Right cardiac atrium (tissue), 5 donors: ENCODE measurements at regions of chr2 and their contacts with region 1.

Region 1: GRCh38 chr2:173075781-173076580 is at the start of gene MAP3K20:
- DNase-seq: peak; percentile 80 to 93 (median 91)
- ATAC-seq: peak; percentile 91
- H3K4me3 ChIP-seq: peak within 1 kb of the TSS; percentile 70
- H3K27ac ChIP-seq: peak within 1 kb of the TSS; percentile 84
- H3K4me1 ChIP-seq: peaks cover 2% of the 10 kb centered on the region
- H3K27me3 ChIP-seq: no peaks in the 10 kb centered on the region
- total RNA-seq, gene MAP3K20: 268 to 327 (median 295) TPM

Region 2: DNA sequence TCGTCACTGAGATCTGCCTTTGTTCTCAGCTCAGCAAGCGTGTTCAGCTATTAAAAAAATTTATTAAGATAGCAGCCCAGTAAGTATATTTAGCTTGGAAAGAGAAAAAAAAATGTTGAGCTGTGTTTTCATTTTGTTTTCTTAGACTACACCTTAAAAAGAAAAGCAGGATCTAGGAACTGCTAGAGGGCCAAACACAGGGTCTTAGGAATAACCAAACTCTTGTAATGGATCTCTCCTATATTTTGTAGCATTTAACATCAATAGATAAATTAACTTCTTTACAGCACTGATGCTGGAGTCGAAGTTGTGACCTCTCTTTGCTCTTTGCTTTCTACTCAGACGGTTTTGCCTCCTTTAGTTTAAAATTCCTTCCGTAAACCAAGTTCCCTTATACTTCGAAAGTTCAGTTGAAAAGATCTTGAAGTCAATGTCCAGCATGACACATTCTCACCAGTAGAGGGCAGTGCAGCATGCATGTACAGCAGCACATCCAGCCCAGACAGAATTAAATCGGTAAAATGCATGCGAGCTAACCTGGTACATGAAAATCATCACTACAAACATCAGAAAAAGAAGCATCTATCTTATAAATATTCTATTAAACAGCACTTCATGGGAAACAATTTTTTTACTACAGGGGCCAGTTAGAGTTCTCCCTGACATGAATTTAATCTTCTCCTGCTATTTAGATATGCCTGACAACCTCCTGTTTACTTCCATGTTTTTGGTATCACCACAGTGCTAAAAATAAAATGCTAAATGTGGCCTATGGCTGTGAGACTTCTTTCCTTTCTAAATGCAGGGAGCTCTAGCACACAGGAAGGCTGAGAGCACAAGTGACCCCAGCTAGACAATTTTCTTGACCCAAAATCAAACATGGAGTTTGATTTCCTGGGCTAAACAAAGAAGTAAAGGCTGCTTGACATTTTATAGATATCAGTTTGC is 48.5 kb before region 1 on chr2:
- intact Hi-C with region 1: loop called in 2 of 4 experiments (anchors 5 kb)
- DNase-seq: peak; percentile 80 to 90 (median 81)
- ATAC-seq: peak; percentile 73 to 82
- H3K4me3 ChIP-seq: no peak overlapping the region
- H3K27ac ChIP-seq: peak overlapping the region; percentile 86
- H3K4me1 ChIP-seq: peaks cover 4% of the 10 kb centered on the region
- H3K27me3 ChIP-seq: no peaks in the 10 kb centered on the region

Region 3: DNA sequence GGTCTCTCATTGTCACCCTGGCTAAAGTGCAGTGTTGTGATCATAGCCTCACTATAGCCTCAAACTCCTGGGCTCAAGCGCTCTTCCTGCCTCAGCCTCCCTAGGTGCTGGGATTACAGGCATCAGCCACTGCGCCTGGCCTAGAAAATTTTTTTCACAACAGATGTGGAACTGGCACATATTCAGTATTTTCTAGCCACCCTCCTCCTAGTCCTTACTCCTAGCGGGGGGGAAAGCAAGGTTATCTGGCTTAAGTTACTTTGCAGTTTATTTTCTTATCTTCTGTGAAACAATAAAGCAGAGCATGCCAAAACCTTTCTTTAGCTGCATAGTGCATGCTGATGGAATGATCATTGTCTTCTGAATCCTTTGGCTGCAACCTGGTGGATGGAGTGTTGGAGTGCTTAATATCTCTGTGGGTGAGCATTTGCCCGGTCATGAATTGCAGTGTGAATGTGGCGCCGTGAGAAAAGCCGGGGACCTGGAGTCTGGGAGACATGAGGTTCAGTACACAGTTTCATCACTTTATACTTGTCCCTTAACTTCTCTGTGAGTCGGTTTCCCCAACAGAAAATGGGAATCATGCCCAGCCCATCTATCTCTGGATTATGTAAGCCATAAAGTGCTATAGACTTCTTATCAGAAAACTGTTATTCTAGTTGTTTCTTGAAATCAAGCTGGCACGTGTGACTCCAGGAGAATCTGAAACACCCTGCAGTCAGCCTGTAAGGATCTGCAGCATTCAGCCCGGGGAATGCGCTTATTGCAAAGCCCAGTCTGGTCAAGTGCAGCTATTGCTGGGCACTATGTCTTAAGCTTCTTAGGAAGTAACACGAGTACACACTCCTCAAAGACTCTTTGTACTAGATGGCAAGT is 38.5 kb before region 1 on chr2:
- intact Hi-C with region 1: loop called in 1 of 4 experiments (anchors 5 kb)
- DNase-seq: peak; percentile 28 to 82 (median 60)
- ATAC-seq: peak; percentile 75 to 91
- H3K4me3 ChIP-seq: no peak overlapping the region
- H3K27ac ChIP-seq: peak overlapping the region; percentile 53
- H3K4me1 ChIP-seq: peaks cover 5% of the 10 kb centered on the region
- H3K27me3 ChIP-seq: no peaks in the 10 kb centered on the region

Region 4: DNA sequence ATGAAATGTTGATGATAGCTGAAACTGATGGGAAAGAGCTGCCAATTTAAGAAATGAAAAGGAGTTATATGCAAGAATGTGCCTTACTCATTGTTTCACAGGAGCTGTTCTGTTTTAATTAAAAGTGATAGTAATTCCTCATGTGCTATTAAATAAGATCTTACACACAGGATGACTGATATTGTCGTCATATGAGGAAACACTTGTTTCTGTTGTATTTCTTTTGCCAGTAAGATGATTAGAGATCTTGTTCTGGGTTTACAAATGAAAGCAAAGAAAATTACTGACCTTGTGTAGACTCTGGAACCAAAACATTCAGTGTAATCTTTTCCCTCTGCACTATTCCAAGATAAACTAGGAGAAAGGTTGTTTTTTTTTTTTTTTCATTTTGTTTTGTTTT is 123.3 kb after region 1 on chr2:
- intact Hi-C with region 1: loop called in 1 of 4 experiments (anchors 5 kb)
- DNase-seq: no peak
- ATAC-seq: peak; percentile 59 to 87
- H3K4me3 ChIP-seq: no peak overlapping the region
- H3K27ac ChIP-seq: no peak overlapping the region
- H3K4me1 ChIP-seq: peaks cover 3% of the 10 kb centered on the region
- H3K27me3 ChIP-seq: no peaks in the 10 kb centered on the region

Region 5: GRCh38 chr2:173205375-173205774 is 129.4 kb after region 1 on chr2:
- intact Hi-C with region 1: loop called in 3 of 4 experiments (anchors 2 to 5 kb)
- DNase-seq: peak; percentile 81 to 92 (median 84)
- ATAC-seq: peak; percentile 96 to 97
- H3K4me3 ChIP-seq: no peak overlapping the region
- H3K27ac ChIP-seq: no peak overlapping the region
- H3K4me1 ChIP-seq: peaks cover 2% of the 10 kb centered on the region
- H3K27me3 ChIP-seq: no peaks in the 10 kb centered on the region

Region 6: GRCh38 chr2:173210270-173211196 is 134.6 kb after region 1 on chr2:
- intact Hi-C with region 1: loop called in 3 of 4 experiments (anchors 2 to 5 kb)
- DNase-seq: peak in 2 of 3 donors; percentile 55 to 70
- ATAC-seq: peak; percentile 91 to 93
- H3K4me3 ChIP-seq: no peak overlapping the region
- H3K27ac ChIP-seq: no peak overlapping the region
- H3K4me1 ChIP-seq: no peaks in the 10 kb centered on the region
- H3K27me3 ChIP-seq: no peaks in the 10 kb centered on the region